Esophagus muscularis mucosa (tissue), 4 donors: ENCODE measurements at regions of chr7 and their contacts with region 1.

Region 1: DNA sequence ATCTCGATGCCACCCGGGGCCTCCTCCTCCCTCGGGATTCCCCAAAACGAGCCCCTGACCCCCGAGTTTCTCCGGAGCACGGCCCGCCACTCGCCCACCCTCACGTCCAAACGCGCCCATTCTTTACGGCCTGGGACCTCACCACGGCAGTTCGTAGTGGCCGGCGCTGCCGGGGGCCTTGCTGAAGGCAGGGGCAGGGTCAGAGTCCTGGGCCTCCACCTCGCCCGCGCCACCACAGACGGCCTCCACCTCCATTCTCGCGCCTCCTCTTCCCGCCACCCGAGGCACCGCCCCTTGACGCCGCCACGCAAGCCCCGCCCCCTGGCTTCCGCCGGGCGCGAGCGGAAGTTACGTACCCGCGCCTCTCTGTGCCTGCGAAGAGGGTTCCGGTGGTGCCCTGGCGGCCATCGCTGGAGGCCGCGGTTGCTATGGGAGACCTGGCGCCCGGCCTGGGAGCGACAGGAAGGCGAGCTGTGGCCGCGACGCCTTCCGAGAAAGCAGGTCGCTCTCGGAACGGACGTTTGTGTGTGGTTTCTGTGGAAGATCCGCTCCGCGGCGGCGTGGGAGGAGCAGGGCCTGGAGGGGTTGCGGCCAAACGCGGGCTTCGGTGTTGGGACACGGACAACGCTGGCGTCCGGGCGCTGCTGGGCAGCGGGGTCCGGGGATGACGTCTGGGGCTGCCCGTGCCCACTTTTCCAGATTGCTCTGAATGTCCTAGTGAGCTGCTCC is at the start of gene RFC2:
- DNase-seq: peak; percentile 99
- H3K4me3 ChIP-seq: peak within 1 kb of the TSS; percentile 69 to 80 (median 72)
- H3K27ac ChIP-seq: peak within 1 kb of the TSS; percentile 85 to 94 (median 92)
- H3K4me1 ChIP-seq: peaks cover 15 to 35% (median 26%) of the 10 kb centered on the region in 4 donors
- H3K27me3 ChIP-seq: no peaks in the 10 kb centered on the region
- CTCF ChIP-seq: peak in 2 of 3 experiments; percentile 40 to 41
- EP300 ChIP-seq: peak; percentile 59
- POLR2A ChIP-seq: peak; percentile 67
- total RNA-seq, gene RFC2: 7.5 to 18.7 (median 14.9) TPM

Region 2: DNA sequence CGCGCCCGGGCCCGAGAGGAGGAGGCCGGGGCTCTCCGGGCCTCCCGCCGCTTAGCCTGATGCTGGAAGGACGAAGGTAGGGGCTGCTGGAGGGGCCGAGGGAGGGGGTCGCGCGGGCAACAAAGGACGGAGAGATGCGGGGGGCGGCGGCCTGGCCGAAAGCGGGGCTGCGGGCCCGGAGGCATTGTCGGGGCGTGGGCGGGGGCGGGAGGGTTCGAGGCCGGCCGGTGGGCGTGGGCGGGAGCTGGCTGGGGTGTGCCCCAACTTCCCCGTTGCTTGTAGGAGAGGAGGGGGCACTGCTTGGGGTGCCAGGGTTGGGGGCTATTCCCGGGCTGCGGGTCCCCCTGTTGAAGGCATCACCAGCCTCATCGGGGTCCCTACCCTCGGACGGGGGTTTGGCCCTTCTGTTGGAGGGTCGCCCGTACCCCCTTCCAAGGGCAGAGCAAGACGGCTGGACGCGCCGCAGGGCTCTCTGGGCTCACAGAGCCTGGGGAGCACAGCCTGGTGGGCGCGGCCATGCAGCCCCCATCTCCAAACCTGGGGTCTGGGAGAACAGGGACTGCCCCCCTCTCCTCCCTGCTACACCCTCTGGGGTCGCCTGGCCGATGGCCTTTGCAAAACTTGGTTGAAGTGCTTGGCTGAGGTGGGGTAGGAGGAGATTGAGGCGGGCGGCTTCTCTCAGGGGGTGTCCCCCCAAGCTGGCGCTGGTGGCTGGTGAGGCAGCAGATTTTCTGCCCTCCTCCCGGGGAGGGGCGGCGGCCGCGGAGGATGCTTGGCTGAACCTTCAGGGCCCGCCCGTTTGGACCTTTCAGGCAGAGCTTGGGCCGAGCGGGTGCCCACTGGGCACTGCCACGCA is 35.6 kb after region 1 on chr7:
- intact Hi-C with region 1: loop called (anchors 5 kb)
- DNase-seq: no peak
- H3K4me3 ChIP-seq: peak overlapping the region; percentile 88 to 95 (median 93)
- H3K27ac ChIP-seq: peak overlapping the region; percentile 81 to 85 (median 84)
- H3K4me1 ChIP-seq: peaks cover 25 to 56% (median 49%) of the 10 kb centered on the region in 4 donors
- H3K27me3 ChIP-seq: no peaks in the 10 kb centered on the region
- CTCF ChIP-seq: no peak
- EP300 ChIP-seq: no peak
- POLR2A ChIP-seq: no peak